ENCODE measurements at regions of chr4 and their contacts with region 1.

Region 1: DNA sequence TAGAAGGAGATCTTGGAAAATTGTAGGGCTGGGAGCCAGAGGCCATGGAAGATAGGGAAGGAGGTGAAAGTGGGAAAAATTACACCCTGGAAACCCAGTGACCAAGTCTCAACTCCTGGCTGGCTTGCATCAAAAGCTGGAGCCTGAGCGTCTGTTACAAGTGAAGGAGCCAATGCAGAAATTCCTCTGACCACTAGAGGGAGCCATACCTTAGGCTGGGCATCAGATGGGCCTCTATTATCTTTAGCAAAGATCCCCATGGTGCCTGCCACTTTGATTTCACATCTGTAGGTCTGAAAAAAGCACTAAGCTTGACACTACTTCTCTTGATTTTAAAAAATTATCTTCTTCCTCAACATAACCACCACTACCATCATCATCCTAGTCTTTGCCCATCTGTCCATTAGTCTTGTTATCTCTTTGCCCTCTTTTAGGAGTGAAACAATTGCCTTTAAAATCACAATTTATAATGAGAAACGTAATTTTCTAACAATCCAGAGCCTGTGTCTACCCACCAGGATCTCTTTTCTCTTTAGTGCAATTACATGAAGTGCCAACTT is 62.9 kb downstream of the ANAPC4 start:
- DNase-seq: peak; percentile 41
- H3K4me3 ChIP-seq: no peak overlapping the region
- H3K27ac ChIP-seq: no peak overlapping the region
- H3K4me1 ChIP-seq: no peaks in the 10 kb centered on the region
- H3K27me3 ChIP-seq: no peaks in the 10 kb centered on the region
- CTCF ChIP-seq: peak; percentile 92 to 93

Region 2: GRCh38 chr4:25552580-25553271 is 112.7 kb after region 1 on chr4:
- CTCF ChIA-PET with region 1: no interaction called
- dilution Hi-C with region 1: no loop called
- in situ Hi-C with region 1: no loop called
- intact Hi-C with region 1: loop called (anchors 5 kb)
- DNase-seq: no peak
- H3K4me3 ChIP-seq: no peak overlapping the region
- H3K27ac ChIP-seq: no peak overlapping the region
- H3K4me1 ChIP-seq: no peaks in the 10 kb centered on the region
- H3K27me3 ChIP-seq: no peaks in the 10 kb centered on the region
- CTCF ChIP-seq: no peak

Region 3: GRCh38 chr4:25767877-25768725 is 328.1 kb after region 1 on chr4:
- CTCF ChIA-PET with region 1: interaction called, 5 read pairs
- dilution Hi-C with region 1: loop called (anchors 5 kb)
- in situ Hi-C with region 1: loop called (anchors 5 to 10 kb)
- intact Hi-C with region 1: loop called (anchors 1 kb)
- DNase-seq: peak; percentile 43
- H3K4me3 ChIP-seq: no peak overlapping the region
- H3K27ac ChIP-seq: no peak overlapping the region
- H3K4me1 ChIP-seq: no peaks in the 10 kb centered on the region
- H3K27me3 ChIP-seq: no peaks in the 10 kb centered on the region
- CTCF ChIP-seq: peak; percentile 88 to 92

Region 4: DNA sequence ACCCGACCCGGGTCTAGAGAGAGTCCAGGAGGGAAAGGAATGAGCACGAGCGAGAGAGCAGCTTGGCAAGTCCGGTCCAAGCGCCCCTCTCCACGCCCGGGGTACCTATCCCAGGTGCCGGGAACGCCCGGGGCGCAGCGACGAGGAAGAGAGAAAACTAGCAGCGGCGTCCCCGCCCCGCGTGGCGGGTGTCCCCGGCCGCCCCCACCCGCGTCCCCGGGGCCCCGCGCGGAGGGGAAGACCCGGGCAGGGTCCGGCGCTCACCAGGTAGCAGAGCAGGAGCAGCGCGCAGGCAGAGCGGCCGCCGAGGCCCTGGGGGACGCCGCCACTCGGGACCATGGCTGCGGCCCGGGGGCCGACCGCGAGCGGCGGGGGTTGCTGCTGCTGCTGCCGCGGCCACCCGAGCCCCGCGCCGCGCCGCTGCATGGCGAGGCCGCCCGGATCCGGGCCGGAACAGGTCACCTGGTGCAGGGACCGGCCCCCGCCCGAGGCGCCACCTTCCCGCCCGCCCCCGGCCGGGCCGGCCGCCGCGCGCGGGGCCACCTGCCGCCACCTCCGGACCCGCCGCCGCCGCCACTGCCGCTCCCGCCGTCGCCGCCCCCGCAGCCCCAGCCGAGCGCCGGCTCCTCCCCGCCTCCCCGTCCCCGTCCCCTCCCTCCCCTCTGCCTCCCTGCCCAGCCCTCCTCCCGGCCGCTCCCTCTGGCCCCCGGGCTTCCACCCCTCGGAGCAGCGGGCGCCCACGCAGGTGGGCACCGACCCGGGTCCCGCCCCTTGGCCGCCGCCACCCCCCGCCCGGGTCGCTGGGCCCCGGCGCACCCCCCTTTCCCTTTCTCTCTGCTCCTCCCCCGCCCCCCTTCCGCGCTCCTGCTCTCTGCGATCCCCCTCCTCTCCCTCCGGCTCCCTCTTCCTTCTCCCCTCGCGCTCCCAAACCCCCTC is 422.7 kb after region 1 on chr4 and contains the start of gene SEL1L3:
- CTCF ChIA-PET with region 1: interaction called, 3 read pairs
- dilution Hi-C with region 1: no loop called
- in situ Hi-C with region 1: no loop called
- intact Hi-C with region 1: loop called (anchors 10 kb)
- DNase-seq: no peak
- H3K4me3 ChIP-seq: peak within 1 kb of the TSS; percentile 50 to 70 (median 66)
- H3K27ac ChIP-seq: no peak within 1 kb of the TSS
- H3K4me1 ChIP-seq: peaks cover 11% of the 10 kb centered on the region
- H3K27me3 ChIP-seq: no peaks in the 10 kb centered on the region
- CTCF ChIP-seq: no peak
- total RNA-seq, gene SEL1L3: 25.0 to 101 TPM

Region 5: DNA sequence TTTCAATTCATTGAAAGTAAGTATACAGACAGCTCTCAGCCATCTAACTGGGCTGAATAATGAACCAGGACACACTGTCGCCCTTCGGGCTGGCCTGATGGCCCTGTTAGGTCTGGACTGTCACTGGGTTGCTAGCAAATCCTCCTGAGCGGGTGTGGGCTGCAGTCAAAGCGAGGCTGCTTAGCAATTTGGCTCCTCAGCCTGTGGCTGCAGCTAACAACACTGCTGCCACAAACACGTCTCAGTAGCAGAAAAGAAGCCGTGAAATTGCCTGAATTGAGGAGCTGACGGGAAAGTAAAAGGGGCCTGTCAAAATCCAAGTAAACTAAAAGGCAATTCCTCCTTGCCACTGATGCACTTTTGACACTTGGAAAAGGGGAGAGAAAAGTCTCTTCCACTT is 546.8 kb after region 1 on chr4:
- CTCF ChIA-PET with region 1: no interaction called
- dilution Hi-C with region 1: no loop called
- in situ Hi-C with region 1: no loop called
- intact Hi-C with region 1: loop called (anchors 5 kb)
- DNase-seq: no peak
- H3K4me3 ChIP-seq: no peak overlapping the region
- H3K27ac ChIP-seq: no peak overlapping the region
- H3K4me1 ChIP-seq: no peaks in the 10 kb centered on the region
- H3K27me3 ChIP-seq: no peaks in the 10 kb centered on the region
- CTCF ChIP-seq: no peak

Region 6: GRCh38 chr4:26410385-26411293 is 970.6 kb after region 1 on chr4:
- CTCF ChIA-PET with region 1: no interaction called
- dilution Hi-C with region 1: no loop called
- in situ Hi-C with region 1: no loop called
- intact Hi-C with region 1: loop called (anchors 2 kb)
- DNase-seq: peak; percentile 42
- H3K4me3 ChIP-seq: no peak overlapping the region
- H3K27ac ChIP-seq: no peak overlapping the region
- H3K4me1 ChIP-seq: no peaks in the 10 kb centered on the region
- H3K27me3 ChIP-seq: no peaks in the 10 kb centered on the region
- CTCF ChIP-seq: peak; percentile 52 to 58